Common myeloid progenitor, CD34-positive (primary cell): ENCODE measurements at regions of chr10 and their contacts with region 1.

Region 1: GRCh38 chr10:58384999-58385783 is at the start of gene TFAM:
- DNase-seq: peak; percentile 94 to 97 (median 96)
- H3K4me3 ChIP-seq: peak within 1 kb of the TSS; percentile 87 to 98 (median 96)
- H3K27ac ChIP-seq: peak within 1 kb of the TSS; percentile 96 to 98
- H3K4me1 ChIP-seq: peaks cover 14 to 30% (median 21%) of the 10 kb centered on the region in 4 experiments
- H3K27me3 ChIP-seq: no peaks in the 10 kb centered on the region

Region 2: DNA sequence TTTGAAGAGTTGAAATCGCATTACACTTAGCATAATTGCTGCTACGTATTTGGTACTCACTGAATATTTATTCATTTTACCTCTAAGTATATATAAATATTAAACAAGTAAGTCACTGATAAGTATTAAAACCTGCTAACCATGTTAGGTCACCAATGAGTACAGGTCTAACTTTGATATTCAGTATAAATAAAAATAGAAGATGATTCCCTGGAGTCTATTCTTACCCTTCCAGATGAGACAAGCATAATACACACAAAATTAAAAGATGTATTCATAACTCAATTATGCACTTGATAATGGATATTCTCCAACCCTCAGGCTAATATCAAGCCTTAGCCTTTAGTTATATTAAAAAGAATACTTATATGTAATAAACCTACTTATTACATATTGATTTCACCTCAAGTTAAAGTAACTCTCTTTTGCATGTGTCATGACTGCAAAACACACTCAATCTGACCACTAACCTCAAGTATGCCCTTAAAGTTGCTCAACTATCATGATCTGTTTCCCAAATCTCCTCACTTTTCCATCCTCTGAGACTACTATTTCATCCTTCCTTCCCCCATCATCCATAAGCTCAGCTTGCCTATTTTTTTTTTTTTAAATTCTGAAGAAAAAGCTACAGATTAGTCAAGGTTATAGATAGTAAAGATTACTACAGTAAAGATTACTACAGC is 164.3 kb before region 1 on chr10:
- CTCF ChIA-PET with region 1: no interaction called
- POLR2A ChIA-PET with region 1: no interaction called
- DNase-seq: no peak
- H3K4me3 ChIP-seq: no peak overlapping the region
- H3K27ac ChIP-seq: no peak overlapping the region
- H3K4me1 ChIP-seq: no peaks in the 10 kb centered on the region
- H3K27me3 ChIP-seq: no peaks in the 10 kb centered on the region

Region 3: DNA sequence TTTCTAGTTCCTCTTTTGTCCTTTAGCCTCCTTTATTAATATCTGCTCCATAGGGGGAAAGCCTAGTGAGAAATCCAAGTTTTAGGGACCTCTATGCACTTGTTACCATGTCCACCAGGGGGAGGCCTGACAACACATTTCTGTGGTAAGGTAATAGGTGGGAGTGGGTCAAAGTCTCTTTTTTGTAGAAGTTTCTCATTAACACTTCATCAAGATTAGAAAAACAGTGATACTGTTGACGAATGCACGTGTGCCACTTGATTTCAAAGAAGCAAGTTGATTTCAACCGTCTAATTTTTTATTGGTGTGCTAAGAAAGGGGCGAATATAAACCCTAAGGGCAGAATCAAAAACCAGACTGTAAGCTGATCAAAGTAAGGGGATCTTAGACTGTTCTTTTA is 85.6 kb before region 1 on chr10:
- CTCF ChIA-PET with region 1: interaction called, 17 read pairs
- POLR2A ChIA-PET with region 1: no interaction called
- DNase-seq: peak; percentile 82 to 92 (median 90)
- H3K4me3 ChIP-seq: no peak overlapping the region
- H3K27ac ChIP-seq: no peak overlapping the region
- H3K4me1 ChIP-seq: peaks cover 0 to 6% (median 0%) of the 10 kb centered on the region in 4 experiments
- H3K27me3 ChIP-seq: peaks cover 0 to 3% (median 0%) of the 10 kb centered on the region in 5 experiments

Region 4: DNA sequence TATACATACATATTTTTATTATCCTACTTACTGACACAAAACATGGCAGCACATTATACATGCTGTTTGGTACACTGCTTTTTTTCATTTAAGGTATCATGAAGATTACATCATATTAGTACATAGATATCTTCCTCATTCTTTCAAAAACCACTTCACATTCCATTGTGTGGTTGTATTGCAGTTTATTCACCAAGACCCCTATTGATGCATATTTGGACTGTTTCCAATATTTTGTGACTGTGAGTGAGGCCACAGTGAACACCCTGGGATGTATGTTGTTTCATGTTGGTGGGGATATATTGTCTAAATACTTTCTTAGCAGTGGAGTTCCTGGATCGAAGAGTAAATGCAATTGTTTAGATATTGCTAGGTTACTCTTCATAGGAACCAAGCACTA is 39.0 kb after region 1 on chr10:
- CTCF ChIA-PET with region 1: no interaction called
- POLR2A ChIA-PET with region 1: no interaction called
- DNase-seq: peak in 1 of 3 donors; percentile 2
- H3K4me3 ChIP-seq: no peak overlapping the region
- H3K27ac ChIP-seq: no peak overlapping the region
- H3K4me1 ChIP-seq: no peaks in the 10 kb centered on the region
- H3K27me3 ChIP-seq: no peaks in the 10 kb centered on the region